ENCODE measurements at regions of chr2 and their contacts with region 1.

Region 1: GRCh38 chr2:5691975-5692529 is at the start of gene SOX11:
- DNase-seq: peak; percentile 99
- H3K4me3 ChIP-seq: peak within 1 kb of the TSS; percentile 91 to 95
- H3K27ac ChIP-seq: peak within 1 kb of the TSS; percentile 84 to 92
- H3K4me1 ChIP-seq: peaks cover 0 to 7% of the 10 kb centered on the region in 2 experiments; a peak in 2 of 4 replicates
- H3K27me3 ChIP-seq: no peaks in the 10 kb centered on the region
- CTCF ChIP-seq: no peak
- EP300 ChIP-seq: peak in 1 of 2 experiments; percentile 15; a peak in 1 of 4 replicates
- RAD21 ChIP-seq: no peak; the same call in 1 of the 2 replicates
- polyA plus RNA-seq, gene SOX11: 2.9 and 3.4 TPM in 2 replicates

Region 2: GRCh38 chr2:4354678-4355077 is 1337.4 kb before region 1 on chr2:
- CTCF ChIA-PET with region 1: interaction called, 10 read pairs
- POLR2A ChIA-PET with region 1: no interaction called
- DNase-seq: peak; percentile 51
- H3K4me3 ChIP-seq: no peak overlapping the region; a peak in 1 of 4 replicates
- H3K27ac ChIP-seq: no peak overlapping the region
- H3K4me1 ChIP-seq: no peaks in the 10 kb centered on the region; a peak in 1 of 4 replicates
- H3K27me3 ChIP-seq: no peaks in the 10 kb centered on the region
- CTCF ChIP-seq: peak; percentile 24; the same call in 1 of the 2 replicates
- EP300 ChIP-seq: no peak
- RAD21 ChIP-seq: peak; percentile 63

Region 3: DNA sequence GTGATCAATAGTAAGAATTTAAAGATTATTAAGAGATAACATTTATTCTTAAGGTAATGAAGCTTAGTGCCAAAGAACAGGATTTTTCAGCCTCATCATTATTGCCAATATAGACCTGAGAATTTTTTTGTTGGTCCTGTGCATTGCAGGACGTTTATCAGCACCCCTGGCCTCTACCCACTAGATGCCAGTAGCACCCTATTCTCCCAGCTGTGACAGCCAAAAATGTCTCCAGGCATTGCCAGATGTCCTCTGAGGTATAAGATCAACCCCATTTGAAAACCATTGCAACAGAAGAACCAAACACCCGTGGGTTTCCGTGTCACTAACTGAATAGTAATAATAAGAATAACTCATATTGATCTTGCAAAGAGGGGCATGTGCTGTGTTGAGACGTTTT is 699.8 kb before region 1 on chr2:
- CTCF ChIA-PET with region 1: interaction called, 14 read pairs
- POLR2A ChIA-PET with region 1: no interaction called
- DNase-seq: peak; percentile 41
- H3K4me3 ChIP-seq: no peak overlapping the region
- H3K27ac ChIP-seq: no peak overlapping the region
- H3K4me1 ChIP-seq: no peaks in the 10 kb centered on the region; a peak in 1 of 4 replicates
- H3K27me3 ChIP-seq: no peaks in the 10 kb centered on the region
- CTCF ChIP-seq: no peak
- EP300 ChIP-seq: no peak
- RAD21 ChIP-seq: peak; percentile 76

Region 4: GRCh38 chr2:5668682-5669250 is 23.3 kb before region 1 on chr2:
- CTCF ChIA-PET with region 1: interaction called, 10 read pairs
- POLR2A ChIA-PET with region 1: interaction called, 4 read pairs
- DNase-seq: peak; percentile 77
- H3K4me3 ChIP-seq: no peak overlapping the region
- H3K27ac ChIP-seq: peak overlapping the region in 1 of 2 experiments; percentile 83; a peak in 2 of 4 replicates
- H3K4me1 ChIP-seq: peaks cover 0 to 21% of the 10 kb centered on the region in 2 experiments; a peak in 2 of 4 replicates
- H3K27me3 ChIP-seq: peaks cover 11% of the 10 kb centered on the region
- CTCF ChIP-seq: no peak
- EP300 ChIP-seq: peak in 1 of 2 experiments; percentile 48; a peak in 1 of 4 replicates
- RAD21 ChIP-seq: peak; percentile 33

Region 5: DNA sequence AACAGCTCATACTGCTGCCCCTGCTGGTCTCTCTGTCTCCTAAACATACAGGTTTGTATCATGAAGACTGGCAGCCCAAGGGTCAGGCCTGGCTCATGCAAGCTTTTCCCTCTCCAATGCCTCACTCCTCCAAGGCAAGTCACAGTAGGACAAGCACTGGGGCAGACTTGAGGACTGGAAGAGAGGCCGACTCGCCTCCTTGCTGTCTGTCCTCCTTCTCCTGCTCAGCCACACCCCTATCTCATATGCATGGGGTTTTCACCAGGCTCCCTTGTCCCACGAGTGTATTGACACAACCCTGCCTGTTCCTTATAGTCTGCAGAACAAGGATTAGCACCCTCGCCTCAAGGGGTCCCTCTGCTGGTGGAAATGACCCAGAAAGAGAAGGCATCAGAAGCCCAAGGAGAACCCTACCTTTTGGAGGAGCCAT is 223.8 kb after region 1 on chr2:
- CTCF ChIA-PET with region 1: interaction called, 11 read pairs
- POLR2A ChIA-PET with region 1: interaction called, 4 read pairs
- DNase-seq: no peak
- H3K4me3 ChIP-seq: no peak overlapping the region
- H3K27ac ChIP-seq: peak overlapping the region in 1 of 2 experiments; percentile 72; a peak in 1 of 4 replicates
- H3K4me1 ChIP-seq: peaks cover 0 to 38% of the 10 kb centered on the region in 2 experiments; a peak in 2 of 4 replicates
- H3K27me3 ChIP-seq: no peaks in the 10 kb centered on the region
- CTCF ChIP-seq: peak; percentile 36
- EP300 ChIP-seq: no peak
- RAD21 ChIP-seq: peak; percentile 45

Measured in SK-N-SH (cell line).